ENCODE measurements at regions of chr6 and their contacts with region 1.

Region 1: GRCh38 chr6:85482905-85483700 is 33.2 kb downstream of the NT5E start:
- DNase-seq: peak; percentile 86
- H3K4me3 ChIP-seq: no peak overlapping the region
- H3K27ac ChIP-seq: no peak overlapping the region
- H3K4me1 ChIP-seq: no peaks in the 10 kb centered on the region
- H3K27me3 ChIP-seq: no peaks in the 10 kb centered on the region
- CTCF ChIP-seq: peak; percentile 100

Region 2: GRCh38 chr6:85354761-85355618 is 128.1 kb before region 1 on chr6:
- intact Hi-C with region 1: loop called (anchors 2 kb)
- DNase-seq: peak; percentile 84
- H3K4me3 ChIP-seq: no peak overlapping the region
- H3K27ac ChIP-seq: no peak overlapping the region
- H3K4me1 ChIP-seq: no peaks in the 10 kb centered on the region
- H3K27me3 ChIP-seq: no peaks in the 10 kb centered on the region
- CTCF ChIP-seq: peak; percentile 91

Region 3: GRCh38 chr6:85394853-85395538 is 88.1 kb before region 1 on chr6:
- intact Hi-C with region 1: no loop called
- DNase-seq: no peak
- H3K4me3 ChIP-seq: no peak overlapping the region
- H3K27ac ChIP-seq: no peak overlapping the region
- H3K4me1 ChIP-seq: no peaks in the 10 kb centered on the region
- H3K27me3 ChIP-seq: no peaks in the 10 kb centered on the region
- CTCF ChIP-seq: no peak

Measured in colonic mucosa (tissue), 4 donors.